ENCODE measurements at regions of chr11 and their contacts with region 1.

Region 1: DNA sequence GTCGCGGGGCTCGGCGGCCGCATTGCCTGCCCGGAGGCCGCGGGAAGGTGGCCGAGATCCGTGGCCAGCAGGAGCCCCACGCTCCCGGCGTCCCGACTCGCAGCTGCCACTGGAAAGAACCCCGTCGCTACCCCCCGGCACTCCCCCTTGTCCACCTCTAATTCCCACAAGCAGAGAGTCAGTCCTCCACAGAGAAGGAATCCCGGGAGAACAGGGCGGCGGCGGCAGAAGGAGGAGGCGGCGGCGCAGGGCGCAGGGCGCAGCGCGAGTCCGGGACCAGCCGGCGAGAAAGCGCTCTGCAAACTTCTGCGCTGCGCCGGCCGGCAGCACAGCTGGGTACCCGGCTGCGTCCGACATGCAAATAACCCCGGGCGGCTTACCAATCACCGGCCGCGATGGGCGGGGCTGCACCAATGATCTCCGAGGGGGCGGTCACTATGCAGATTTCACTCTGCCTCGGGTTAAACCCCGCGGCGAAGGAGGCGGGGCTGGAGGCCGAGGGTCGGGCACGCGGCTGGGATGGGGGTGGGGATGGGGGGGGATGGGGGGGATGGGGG is at the start of gene ABTB2:
- DNase-seq: peak; percentile 90
- ATAC-seq: peak; percentile 89
- H3K4me3 ChIP-seq: peak within 1 kb of the TSS; percentile 56 to 68
- H3K27ac ChIP-seq: peak within 1 kb of the TSS; percentile 62
- H3K4me1 ChIP-seq: peaks cover 3 to 30% of the 10 kb centered on the region in 2 experiments; a peak in 3 of 4 replicates
- H3K27me3 ChIP-seq: no peaks in the 10 kb centered on the region
- CTCF ChIP-seq: no peak
- POLR2A ChIP-seq: peak; percentile 30
- RAD21 ChIP-seq: peak; percentile 50
- total RNA-seq, gene ABTB2: 6.8 TPM

Region 2: GRCh38 chr11:33808228-33808828 is 549.5 kb before region 1 on chr11:
- CTCF ChIA-PET with region 1: no interaction called
- POLR2A ChIA-PET with region 1: no interaction called
- RAD21 ChIA-PET with region 1: no interaction called
- intact Hi-C with region 1: loop called (anchors 1 kb)
- DNase-seq: peak; percentile 75
- ATAC-seq: peak; percentile 100
- H3K4me3 ChIP-seq: no peak overlapping the region
- H3K27ac ChIP-seq: no peak overlapping the region
- H3K4me1 ChIP-seq: peaks cover 0 to 6% of the 10 kb centered on the region in 2 experiments; a peak in 1 of 4 replicates
- H3K27me3 ChIP-seq: no peaks in the 10 kb centered on the region
- CTCF ChIP-seq: peak; percentile 78 to 93 (median 90); a peak in 5 of 6 replicates
- POLR2A ChIP-seq: no peak
- RAD21 ChIP-seq: peak; percentile 88

Region 3: DNA sequence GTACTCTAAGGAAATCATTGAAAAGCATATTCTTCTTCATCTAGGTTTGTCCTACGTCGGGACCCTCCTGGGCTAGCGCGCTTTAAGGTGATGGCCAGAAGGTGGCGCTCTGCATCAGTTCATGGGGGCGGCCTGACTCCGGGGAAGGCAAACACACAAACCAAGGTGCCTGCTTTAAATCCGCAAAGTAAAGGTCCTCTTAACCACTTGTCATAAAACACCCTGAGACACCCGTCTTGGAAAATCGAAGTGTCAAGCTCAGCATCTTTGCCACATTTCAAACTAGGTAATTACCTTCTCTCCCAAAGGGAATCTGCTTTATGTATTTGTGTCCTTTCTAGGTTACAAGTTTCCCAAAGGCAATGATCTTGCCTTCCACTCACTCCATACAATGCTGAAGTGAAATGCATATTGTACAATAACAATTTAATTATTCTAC is 499.8 kb before region 1 on chr11:
- CTCF ChIA-PET with region 1: no interaction called
- POLR2A ChIA-PET with region 1: no interaction called
- RAD21 ChIA-PET with region 1: no interaction called
- intact Hi-C with region 1: loop called (anchors 1 kb)
- DNase-seq: peak; percentile 55
- ATAC-seq: peak; percentile 99
- H3K4me3 ChIP-seq: no peak overlapping the region
- H3K27ac ChIP-seq: no peak overlapping the region
- H3K4me1 ChIP-seq: peaks cover 0 to 3% of the 10 kb centered on the region in 2 experiments; a peak in 1 of 4 replicates
- H3K27me3 ChIP-seq: no peaks in the 10 kb centered on the region
- CTCF ChIP-seq: peak; percentile 88 to 98 (median 95)
- POLR2A ChIP-seq: no peak
- RAD21 ChIP-seq: peak; percentile 97

Region 4: DNA sequence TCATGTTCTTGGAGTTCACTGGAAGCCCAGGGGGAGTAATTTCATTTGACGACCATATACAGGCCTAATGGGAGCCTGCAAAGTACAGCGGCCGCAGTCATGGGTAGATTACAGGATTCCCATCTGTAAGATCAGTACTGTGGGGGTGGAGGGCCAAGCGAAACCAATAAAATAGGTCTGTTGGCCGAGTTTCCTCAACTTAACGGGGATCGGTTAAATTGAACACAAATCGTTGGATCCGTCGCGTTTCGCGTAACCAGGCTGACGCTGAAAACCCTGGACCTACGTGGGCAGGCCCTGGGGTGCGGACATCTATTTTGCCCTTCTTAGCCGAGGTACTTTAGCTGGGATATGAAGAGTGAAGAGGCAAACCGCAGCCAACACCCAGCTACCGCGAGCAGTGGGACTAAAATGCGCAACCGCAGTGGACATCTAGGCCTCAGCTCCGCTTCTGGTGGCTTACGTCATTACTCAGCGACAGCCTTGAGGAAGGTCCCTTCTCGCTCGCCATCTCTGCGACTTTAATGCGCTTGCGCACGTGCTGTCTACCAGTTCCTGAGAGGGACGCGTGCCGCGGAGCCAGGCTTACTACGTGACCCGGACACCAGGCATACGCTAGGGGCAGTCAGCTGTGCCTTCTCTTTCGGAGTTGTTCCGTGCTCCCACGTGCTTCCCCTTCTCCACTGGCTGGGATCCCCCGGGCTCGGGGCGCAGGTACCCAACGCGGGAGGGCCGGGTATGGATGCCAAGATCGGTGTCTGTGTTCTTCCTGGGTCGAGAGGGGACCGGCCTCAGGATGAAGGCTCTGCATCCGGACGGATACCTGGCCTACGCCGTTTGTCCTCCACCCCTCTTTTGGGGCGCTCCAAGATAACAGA is 252.5 kb before region 1 on chr11 and contains the start of gene NAT10:
- CTCF ChIA-PET with region 1: interaction called, 4 read pairs
- POLR2A ChIA-PET with region 1: interaction called, 5 read pairs
- RAD21 ChIA-PET with region 1: no interaction called
- intact Hi-C with region 1: loop called (anchors 5 kb)
- DNase-seq: peak; percentile 98
- ATAC-seq: peak; percentile 88
- H3K4me3 ChIP-seq: peak within 1 kb of the TSS; percentile 89 to 96
- H3K27ac ChIP-seq: peak within 1 kb of the TSS; percentile 73
- H3K4me1 ChIP-seq: peaks cover 4 to 17% of the 10 kb centered on the region in 2 experiments; a peak in 3 of 4 replicates
- H3K27me3 ChIP-seq: no peaks in the 10 kb centered on the region
- CTCF ChIP-seq: no peak
- POLR2A ChIP-seq: peak; percentile 95
- RAD21 ChIP-seq: no peak
- total RNA-seq, gene NAT10: 101 TPM

Region 5: DNA sequence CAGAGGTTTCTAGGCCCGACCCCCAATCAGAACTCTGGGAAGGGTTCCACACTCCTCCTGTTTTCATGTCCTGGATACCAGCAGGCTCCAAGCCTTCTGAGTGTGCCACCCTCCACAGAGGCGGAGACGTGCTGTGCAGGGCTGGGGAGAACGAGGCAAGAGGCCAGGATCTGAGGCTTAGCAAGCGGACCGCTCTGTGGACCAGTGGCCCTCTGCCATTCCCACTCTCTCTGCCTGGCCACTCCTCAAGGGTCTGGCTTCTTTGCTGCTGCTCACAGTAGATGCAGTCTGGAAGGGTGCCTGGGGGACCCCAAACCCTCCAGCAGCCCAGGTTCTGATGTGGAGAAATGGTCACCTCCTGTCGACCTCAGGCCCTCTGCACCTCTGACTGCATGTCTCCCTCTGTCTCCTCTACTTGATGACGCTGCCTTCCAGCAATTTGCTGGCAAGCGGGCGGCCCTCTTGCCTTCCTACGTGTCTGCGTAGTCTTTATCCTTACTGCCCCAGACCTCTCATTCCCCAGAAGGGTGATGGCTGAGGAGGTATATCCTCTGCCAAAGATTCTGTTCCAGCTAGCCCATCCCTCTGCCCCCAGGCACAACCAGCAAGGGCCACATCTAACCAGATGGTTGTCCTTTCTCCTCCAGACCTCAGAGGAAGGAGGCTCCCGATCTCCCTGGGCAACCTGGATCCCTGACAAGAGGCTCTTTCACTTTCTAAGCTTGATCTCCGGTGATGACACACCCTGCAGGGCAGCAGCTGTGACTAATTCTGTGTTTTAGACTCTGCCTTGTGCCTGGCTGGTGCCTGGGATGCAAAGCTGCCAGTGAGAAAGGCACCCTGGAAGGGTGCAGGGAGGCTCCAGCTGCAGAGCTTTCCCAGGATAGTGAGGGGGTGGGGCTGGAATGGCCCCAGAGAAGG is 165.0 kb before region 1 on chr11:
- CTCF ChIA-PET with region 1: no interaction called
- POLR2A ChIA-PET with region 1: no interaction called
- RAD21 ChIA-PET with region 1: no interaction called
- intact Hi-C with region 1: loop called (anchors 5 kb)
- DNase-seq: peak; percentile 60
- ATAC-seq: peak; percentile 87
- H3K4me3 ChIP-seq: peak overlapping the region in 1 of 2 experiments; percentile 26; a peak in 1 of 4 replicates
- H3K27ac ChIP-seq: 0 out of 2 replicates have a peak overlapping the region, but pooled peaks have one; percentile 1
- H3K4me1 ChIP-seq: peaks cover 19 to 42% of the 10 kb centered on the region in 2 experiments
- H3K27me3 ChIP-seq: no peaks in the 10 kb centered on the region
- CTCF ChIP-seq: no peak
- POLR2A ChIP-seq: no peak
- RAD21 ChIP-seq: no peak

Region 6: DNA sequence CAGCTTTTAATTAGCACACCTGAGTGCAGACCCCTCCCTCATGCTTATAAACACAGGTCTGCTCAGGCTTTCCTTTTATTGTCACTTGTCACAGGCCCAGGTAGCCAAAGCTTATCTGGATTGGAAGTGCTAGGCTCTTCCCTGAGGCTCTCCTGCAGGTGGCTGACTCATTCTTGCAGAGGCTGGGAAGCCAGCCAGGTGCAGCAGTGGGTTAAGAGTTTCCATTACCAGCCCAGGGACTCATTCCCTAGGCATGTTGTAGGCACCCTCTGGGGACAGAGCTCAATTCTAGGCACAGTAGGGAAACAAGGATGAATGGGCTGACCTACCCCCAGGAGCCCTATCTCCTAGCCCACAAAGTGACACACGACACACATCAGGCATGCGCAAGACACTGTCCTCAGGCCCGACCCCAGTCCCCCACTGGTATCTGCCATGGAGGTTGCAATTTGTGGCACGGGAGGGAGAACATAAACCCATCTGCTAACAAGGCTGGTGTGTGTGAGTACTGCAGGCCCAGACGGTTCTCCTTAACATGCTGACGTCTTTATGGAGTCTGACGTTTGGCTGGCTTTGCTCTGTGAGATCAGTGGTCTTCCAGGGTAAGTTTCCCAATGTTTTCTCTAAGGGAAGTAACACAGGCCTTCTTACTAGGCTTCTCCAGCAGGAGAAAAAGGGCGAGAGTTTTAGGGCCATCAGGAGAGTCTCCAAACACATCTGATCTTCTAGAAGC is 94.2 kb before region 1 on chr11:
- CTCF ChIA-PET with region 1: no interaction called
- POLR2A ChIA-PET with region 1: interaction called, 11 read pairs
- RAD21 ChIA-PET with region 1: no interaction called
- intact Hi-C with region 1: loop called (anchors 5 kb)
- DNase-seq: peak; percentile 99
- ATAC-seq: peak; percentile 96
- H3K4me3 ChIP-seq: peak overlapping the region in 1 of 2 experiments; percentile 41; a peak in 3 of 4 replicates
- H3K27ac ChIP-seq: peak overlapping the region; percentile 90
- H3K4me1 ChIP-seq: peaks cover 37 to 44% of the 10 kb centered on the region in 2 experiments
- H3K27me3 ChIP-seq: no peaks in the 10 kb centered on the region
- CTCF ChIP-seq: no peak
- POLR2A ChIP-seq: no peak
- RAD21 ChIP-seq: peak; percentile 63

Region 7: GRCh38 chr11:34899633-34900016 is 541.8 kb after region 1 on chr11:
- CTCF ChIA-PET with region 1: interaction called, 3 read pairs
- POLR2A ChIA-PET with region 1: no interaction called
- RAD21 ChIA-PET with region 1: no interaction called
- intact Hi-C with region 1: loop called (anchors 2 kb)
- DNase-seq: no peak
- ATAC-seq: peak; percentile 16; the same call in 1 of the 2 replicates
- H3K4me3 ChIP-seq: no peak overlapping the region
- H3K27ac ChIP-seq: no peak overlapping the region
- H3K4me1 ChIP-seq: peaks cover 3 to 5% of the 10 kb centered on the region in 2 experiments; a peak in 3 of 4 replicates
- H3K27me3 ChIP-seq: no peaks in the 10 kb centered on the region
- CTCF ChIP-seq: no peak
- POLR2A ChIP-seq: no peak
- RAD21 ChIP-seq: no peak

Measured in HCT116 (cell line).